Transverse colon (tissue), 4 donors: ENCODE measurements at regions of chr11 and their contacts with region 1.

Region 1: DNA sequence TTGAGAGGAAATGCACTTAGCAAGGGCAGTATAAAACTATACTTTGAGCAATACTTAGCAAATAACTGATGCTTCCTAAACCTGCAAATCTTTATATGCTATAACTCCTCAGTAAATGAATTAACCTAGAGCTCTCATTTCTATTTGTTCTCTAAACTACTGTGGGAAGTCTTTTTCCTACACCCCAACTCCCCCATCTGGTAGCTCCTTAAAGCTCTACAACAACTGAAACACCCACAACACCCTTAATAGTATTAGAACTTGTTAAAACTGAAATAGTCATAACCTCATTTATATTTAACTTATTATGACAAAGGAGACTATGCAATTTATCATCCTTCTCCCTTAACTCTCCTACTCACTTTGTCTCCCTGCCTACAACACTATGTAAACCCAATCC is 43.4 kb downstream of the GUCY1A2 start:
- DNase-seq: no peak
- H3K4me3 ChIP-seq: no peak overlapping the region
- H3K27ac ChIP-seq: no peak overlapping the region
- H3K4me1 ChIP-seq: no peaks in the 10 kb centered on the region
- H3K27me3 ChIP-seq: no peaks in the 10 kb centered on the region
- CTCF ChIP-seq: no peak
- EP300 ChIP-seq: no peak
- POLR2A ChIP-seq: no peak

Region 2: GRCh38 chr11:105910095-105910715 is 1064.6 kb before region 1 on chr11:
- in situ Hi-C with region 1: no loop called
- intact Hi-C with region 1: loop called (anchors 5 kb)
- DNase-seq: no peak
- H3K4me3 ChIP-seq: no peak overlapping the region
- H3K27ac ChIP-seq: no peak overlapping the region
- H3K4me1 ChIP-seq: no peaks in the 10 kb centered on the region
- H3K27me3 ChIP-seq: no peaks in the 10 kb centered on the region
- CTCF ChIP-seq: no peak
- EP300 ChIP-seq: no peak
- POLR2A ChIP-seq: no peak

Region 3: DNA sequence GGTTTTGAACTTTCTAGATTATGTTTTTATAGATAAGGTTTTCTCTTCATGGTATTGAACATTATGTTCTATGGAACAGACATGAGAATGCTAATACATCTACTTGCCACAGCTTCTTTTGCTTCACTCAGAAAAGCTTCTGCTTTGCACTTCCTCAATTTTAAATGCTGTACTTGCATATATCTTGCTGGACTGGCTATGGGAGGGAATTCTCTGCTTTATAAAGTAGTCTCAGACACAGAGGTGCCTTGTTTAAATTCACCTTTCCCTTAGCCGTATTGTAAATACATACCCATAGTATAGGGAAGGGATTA is 1863.9 kb after region 1 on chr11:
- in situ Hi-C with region 1: no loop called
- intact Hi-C with region 1: no loop called
- DNase-seq: no peak
- H3K4me3 ChIP-seq: no peak overlapping the region
- H3K27ac ChIP-seq: no peak overlapping the region
- H3K4me1 ChIP-seq: no peaks in the 10 kb centered on the region
- H3K27me3 ChIP-seq: no peaks in the 10 kb centered on the region
- CTCF ChIP-seq: no peak
- EP300 ChIP-seq: no peak
- POLR2A ChIP-seq: no peak